Transverse colon (tissue), 4 donors: ENCODE measurements at regions of chr2 and their contacts with region 1.

Region 1: GRCh38 chr2:61993444-61994024 is 88.1 kb downstream of the COMMD1 start:
- DNase-seq: peak; percentile 22
- H3K4me3 ChIP-seq: no peak overlapping the region
- H3K27ac ChIP-seq: no peak overlapping the region
- H3K4me1 ChIP-seq: no peaks in the 10 kb centered on the region
- H3K27me3 ChIP-seq: no peaks in the 10 kb centered on the region
- CTCF ChIP-seq: peak; percentile 51 to 68 (median 61)
- EP300 ChIP-seq: no peak
- POLR2A ChIP-seq: no peak

Region 2: DNA sequence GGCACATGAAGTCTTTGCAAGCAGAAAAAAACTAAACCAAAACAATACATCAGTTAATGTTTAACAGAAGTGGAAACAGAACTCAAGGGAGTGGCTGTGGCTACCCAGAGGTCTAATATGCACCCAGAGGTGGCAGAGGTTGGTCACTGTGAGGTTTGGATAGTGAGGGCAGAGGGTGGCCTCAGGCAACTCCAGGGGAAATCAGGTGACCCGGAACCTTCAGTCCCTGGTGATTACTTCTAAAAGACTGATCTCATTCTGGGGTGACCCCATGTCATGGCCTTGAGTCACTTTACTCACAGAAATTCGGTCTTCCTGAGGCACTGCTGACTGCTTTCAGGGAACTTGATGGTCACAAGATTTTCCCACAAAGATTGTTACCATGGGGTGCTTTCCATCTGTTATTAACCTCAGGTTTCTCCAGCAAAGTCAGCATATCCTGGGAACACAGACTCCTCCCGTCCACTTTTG is 413.1 kb after region 1 on chr2:
- in situ Hi-C with region 1: loop called (anchors 5 to 25 kb)
- intact Hi-C with region 1: no loop called
- DNase-seq: no peak
- H3K4me3 ChIP-seq: no peak overlapping the region
- H3K27ac ChIP-seq: no peak overlapping the region
- H3K4me1 ChIP-seq: peaks cover 5 to 10% (median 9%) of the 10 kb centered on the region in 4 donors
- H3K27me3 ChIP-seq: no peaks in the 10 kb centered on the region
- CTCF ChIP-seq: no peak
- EP300 ChIP-seq: no peak
- POLR2A ChIP-seq: no peak